ENCODE measurements at regions of chr1 and their contacts with region 1.

Region 1: GRCh38 chr1:234722904-234723720 is 113.1 kb upstream of the IRF2BP2 start:
- DNase-seq: no peak

Region 2: DNA sequence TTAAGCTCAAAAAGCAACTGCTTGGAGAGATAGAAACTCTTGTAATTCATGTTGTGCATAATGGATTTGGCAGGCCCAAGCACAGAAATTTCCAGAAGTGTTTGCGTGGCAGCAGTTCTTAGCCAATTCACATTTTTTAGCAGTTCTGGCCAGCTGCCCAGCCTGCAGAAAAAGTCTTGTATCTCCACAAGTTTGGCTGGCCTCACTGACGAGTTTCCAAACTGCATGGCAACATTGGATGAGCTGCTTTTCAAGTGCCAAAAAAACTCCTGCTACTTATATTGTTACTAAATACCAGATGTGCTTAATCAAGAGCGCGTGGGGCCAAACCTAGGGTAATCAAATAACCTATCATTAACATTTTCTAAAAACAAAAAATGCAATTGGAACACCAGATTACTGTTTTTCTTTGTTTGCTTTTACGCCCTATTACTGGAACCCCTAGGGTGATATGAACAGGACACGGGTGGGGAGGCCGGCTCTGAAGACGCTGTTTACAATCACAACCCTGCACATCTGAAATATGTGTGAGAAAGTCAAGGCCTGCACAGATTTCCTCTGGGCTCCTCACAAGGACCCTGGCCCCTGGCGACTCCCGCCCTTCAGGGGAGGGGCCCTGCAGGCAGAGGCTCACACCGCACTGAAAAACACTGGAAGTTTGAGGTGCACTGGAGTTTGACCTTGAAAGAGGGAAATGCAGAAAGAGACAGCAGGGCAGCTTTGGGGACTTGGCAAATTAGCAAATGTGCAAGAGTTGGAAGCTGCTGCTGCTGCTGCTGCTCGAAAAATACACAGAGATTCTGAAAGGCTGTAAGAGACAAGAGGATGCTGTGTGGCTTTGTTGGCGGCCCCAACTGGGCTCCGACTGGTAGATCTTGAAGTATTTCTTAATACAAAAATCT is 188.9 kb before region 1 on chr1:
- intact Hi-C with region 1: loop called (anchors 1 kb)
- DNase-seq: peak; percentile 92

Region 3: DNA sequence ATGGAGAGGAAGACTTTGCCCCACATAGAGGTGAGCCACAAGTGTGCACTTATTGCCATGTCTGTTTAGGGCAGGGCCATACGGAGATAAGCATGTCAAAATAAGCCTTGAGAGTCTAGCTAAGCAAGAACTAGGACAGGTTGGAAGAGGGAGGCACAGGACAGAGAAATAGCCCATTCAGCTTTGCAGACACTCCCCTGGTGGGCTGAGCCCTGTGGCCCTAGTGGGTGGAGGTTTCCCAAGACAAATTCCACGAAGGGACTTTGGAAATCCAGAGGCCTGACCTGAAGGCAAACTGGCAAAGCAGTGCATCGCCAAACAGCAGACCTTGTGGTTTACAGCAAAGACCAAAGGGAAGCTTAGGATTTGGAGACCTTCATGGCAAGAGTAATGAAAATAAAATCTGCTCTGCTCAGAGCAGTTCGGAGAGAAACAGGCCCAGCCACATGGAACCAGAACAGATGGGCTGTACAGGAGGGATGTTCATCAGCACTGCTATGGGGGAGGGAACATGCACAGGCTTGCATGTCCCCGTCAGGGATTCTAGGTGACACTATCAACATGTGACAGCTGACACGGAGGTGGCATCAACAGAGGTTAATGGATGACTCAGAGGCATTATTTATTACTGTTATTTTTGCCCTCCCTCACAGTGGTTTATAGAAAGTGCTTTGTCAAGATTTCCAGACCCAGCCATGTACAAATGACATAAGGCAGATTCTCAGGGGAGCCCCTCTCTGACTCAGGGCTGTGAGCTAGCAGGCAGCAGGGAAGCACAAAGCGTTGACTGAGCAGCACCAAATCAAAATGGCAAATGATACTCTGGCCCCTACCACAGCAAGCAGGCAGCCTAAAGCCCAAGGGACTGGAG is 23.1 kb before region 1 on chr1:
- intact Hi-C with region 1: loop called (anchors 2 kb)
- DNase-seq: no peak

Region 4: DNA sequence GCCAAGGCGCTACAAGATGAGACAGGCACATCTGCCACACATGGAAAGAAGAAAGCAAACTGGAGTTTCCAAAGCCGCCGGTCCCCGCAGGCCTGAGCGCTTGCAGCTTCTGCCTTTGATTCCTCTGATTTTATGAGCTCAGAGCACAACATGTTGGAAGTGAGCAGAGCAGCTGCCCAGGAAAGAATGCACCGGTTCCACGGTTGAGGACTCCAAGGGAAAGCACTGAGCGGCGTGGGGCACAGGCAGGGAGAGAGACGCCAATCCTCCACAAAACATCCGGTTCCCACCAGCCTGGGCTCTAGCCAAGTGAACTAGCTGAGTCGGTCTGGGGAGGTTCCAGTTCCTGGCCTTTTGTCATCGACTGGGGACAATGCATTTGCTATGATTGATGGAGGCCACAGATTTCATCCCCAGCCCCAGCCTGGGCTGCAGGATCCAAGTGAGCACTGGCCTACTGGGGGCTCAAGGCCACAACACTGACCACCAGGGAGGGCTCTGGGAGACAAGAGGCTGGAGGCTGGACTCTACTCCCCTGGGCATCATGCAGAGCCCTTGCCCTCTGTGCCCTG is 139.9 kb after region 1 on chr1:
- intact Hi-C with region 1: loop called (anchors 5 kb)
- DNase-seq: peak; percentile 87

Region 5: GRCh38 chr1:234893725-234894630 is 170.9 kb after region 1 on chr1:
- intact Hi-C with region 1: loop called (anchors 2 kb)
- DNase-seq: no peak

Region 6: DNA sequence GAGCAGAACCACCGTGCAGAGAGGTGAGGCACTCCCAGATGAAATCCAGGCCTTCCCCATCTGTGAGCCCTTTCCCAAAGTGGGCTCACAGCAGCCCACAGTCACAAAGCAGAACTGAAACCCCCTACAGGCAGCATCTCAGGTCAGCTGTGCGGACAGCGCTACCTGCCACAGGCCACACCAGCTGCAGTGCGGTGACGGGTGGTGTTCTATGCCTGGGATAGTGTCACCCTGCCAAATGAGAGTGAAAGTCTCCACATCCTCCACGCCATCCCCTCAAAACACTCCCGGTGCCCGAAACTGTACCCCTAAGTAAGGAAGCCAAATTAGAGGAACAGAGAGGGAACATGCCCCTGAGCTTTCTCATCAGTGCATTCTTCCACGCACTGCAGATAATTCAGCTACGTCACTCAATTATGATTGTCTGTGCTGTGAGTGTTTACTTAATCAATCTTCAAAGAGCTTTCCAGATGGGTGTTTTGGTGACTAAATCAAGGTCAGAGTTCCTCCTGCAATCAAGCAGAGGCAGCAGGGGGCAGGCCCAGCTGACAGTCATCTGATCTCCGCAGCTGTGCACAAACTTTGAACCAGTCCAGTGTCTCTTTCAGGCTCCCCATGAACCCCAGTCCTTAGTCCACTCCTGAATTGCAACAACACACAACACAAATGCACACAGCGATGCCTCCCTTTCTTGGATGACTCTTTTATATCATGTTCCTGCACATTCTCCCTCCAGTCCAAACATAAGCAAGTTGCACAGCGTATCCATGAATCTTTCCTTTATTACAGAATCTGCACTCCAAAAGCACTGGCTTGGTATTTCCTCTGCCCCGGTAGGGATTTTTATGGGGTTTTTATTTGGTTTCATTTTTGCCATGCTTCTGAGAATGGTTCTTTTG is 255.5 kb after region 1 on chr1:
- intact Hi-C with region 1: loop called (anchors 5 kb)
- DNase-seq: peak; percentile 76

Region 7: GRCh38 chr1:235075188-235075926 is 352.2 kb after region 1 on chr1:
- intact Hi-C with region 1: loop called (anchors 1 kb)
- DNase-seq: peak; percentile 89